GM13977 (cell line): ENCODE measurements at regions of chr1 and their contacts with region 1.

Region 1: GRCh38 chr1:26284597-26285360 is 4.9 kb downstream of the SH3BGRL3 start:
- DNase-seq: peak; percentile 79
- CTCF ChIP-seq: peak; percentile 94

Region 2: GRCh38 chr1:26321315-26322041 is 36.7 kb after region 1 on chr1:
- in situ Hi-C with region 1: loop called (anchors 5 kb)
- DNase-seq: peak; percentile 86
- CTCF ChIP-seq: peak; percentile 91